Stomach (tissue), 19 donors: ENCODE measurements at regions of chr2 and their contacts with region 1.

Region 1: DNA sequence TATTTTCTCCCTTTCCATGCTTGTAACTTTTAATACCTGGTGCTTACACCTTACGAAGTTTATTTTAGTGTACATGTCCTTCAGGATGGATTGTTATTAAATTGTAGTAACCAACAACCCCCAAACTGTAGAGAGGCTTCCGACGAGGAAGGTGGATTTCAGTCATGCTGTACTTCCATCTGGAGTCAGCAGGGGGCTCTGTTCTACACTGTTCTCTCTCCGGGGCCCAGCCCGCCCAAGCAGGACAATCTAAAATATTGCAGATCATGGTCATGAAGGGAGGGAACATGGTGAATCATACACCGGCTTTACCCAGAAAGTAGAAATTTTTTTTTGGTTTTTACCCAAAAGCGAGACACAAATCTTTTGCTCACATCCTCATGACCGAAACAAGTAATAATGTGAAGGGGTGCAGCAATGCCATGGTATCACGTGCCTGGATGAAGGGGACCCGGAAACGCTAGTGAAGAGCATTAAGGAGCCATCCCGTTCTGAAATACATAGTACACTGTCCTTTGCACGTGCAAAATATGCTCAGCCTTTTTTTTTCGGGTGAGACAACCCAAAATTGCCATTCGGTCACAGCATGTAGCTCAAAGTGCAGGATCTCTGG is 884.8 kb downstream of the EPHA4 start:
- DNase-seq: peak; percentile 69 to 83
- H3K4me3 ChIP-seq: no peak overlapping the region
- H3K27ac ChIP-seq: no peak overlapping the region
- H3K4me1 ChIP-seq: no peaks in the 10 kb centered on the region
- H3K27me3 ChIP-seq: peaks cover 0 to 13% (median 0%) of the 10 kb centered on the region in 3 donors
- CTCF ChIP-seq: peak in 5 of 7 experiments; percentile 58 to 91 (median 81)
- EP300 ChIP-seq: no peak
- POLR2A ChIP-seq: no peak

Region 2: DNA sequence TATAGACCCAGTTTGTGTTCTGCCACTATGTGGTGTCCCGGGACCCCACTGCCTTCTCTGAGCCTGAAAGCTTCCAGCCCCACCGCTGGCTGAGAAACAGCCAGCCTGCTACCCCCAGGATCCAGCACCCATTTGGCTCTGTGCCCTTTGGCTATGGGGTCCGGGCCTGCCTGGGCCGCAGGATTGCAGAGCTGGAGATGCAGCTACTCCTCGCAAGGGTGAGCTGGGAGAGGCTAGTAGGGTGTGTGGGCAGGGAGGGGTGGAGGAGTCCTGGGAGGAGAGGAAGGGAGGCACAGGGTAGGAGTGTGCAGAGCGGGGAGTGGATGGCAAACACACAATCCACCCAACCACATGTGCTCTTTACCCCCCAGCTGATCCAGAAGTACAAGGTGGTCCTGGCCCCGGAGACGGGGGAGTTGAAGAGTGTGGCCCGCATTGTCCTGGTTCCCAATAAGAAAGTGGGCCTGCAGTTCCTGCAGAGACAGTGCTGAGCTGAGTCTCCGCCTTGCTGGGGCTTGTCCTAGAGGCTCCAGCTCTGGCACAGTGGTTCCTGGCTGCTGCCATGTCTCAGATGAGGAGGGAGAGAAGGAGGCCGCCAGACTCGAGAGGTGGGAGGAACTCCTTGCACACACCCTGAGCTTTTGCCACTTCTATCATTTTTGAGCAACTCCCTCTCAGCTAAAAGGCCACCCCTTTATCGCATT is 1872.6 kb before region 1 on chr2:
- intact Hi-C with region 1: no loop called
- DNase-seq: no peak
- H3K4me3 ChIP-seq: no peak overlapping the region
- H3K27ac ChIP-seq: no peak overlapping the region
- H3K4me1 ChIP-seq: peaks cover 0 to 4% (median 0%) of the 10 kb centered on the region in 4 donors
- H3K27me3 ChIP-seq: no peaks in the 10 kb centered on the region
- CTCF ChIP-seq: no peak
- EP300 ChIP-seq: no peak
- POLR2A ChIP-seq: no peak

Region 3: DNA sequence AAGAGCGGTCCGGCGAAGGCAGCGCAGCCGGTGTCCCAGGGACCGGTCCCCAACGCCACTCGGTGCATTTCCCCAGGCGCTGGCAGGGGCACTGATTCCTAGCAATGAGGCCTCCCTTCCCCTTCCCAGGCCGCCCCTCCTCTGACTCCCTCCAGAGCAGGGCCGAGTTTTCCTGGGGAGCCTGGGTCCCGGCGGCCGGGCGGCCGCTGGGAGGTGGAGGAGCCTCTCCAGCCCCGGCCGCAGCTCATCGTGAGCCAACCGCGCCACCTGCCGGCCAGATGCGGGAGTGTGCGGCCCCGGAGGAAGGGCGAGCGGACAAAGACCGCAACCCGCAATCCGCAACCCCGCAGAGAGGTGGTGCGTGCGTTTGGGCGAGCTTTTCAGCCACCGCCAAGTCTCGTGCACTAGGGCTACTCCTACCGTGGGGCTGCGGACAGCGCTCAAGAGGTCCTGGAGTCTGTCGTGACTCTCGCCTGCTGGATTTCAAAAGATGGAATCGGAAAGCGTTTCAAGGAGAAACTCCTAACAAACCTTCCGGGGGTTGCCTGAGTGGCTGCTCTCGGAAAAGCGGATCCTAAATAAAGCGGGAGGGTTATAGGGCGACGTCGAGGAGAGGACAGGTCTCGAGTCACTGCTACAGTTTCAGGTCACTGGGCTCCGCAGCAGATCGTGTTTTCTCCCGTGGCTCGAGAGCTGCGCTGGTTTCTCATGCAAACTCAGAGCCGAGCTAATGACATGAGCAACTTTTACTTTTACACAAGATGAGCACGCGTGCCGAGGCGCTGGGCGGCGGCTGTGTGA is 886.3 kb after region 1 on chr2:
- intact Hi-C with region 1: loop called (anchors 5 kb)
- DNase-seq: peak; percentile 89 to 95
- H3K4me3 ChIP-seq: peak overlapping the region; percentile 64 to 77 (median 74)
- H3K27ac ChIP-seq: peak overlapping the region; percentile 26 to 85 (median 79)
- H3K4me1 ChIP-seq: peaks cover 0 to 58% (median 35%) of the 10 kb centered on the region in 4 donors
- H3K27me3 ChIP-seq: peaks cover 0 to 70% (median 42%) of the 10 kb centered on the region in 3 donors
- CTCF ChIP-seq: peak in 6 of 7 experiments; percentile 77 to 99 (median 96)
- EP300 ChIP-seq: no peak
- POLR2A ChIP-seq: no peak